ENCODE measurements at regions of chr2 and their contacts with region 1.

Region 1: GRCh38 chr2:68849579-68850030 is 21.6 kb downstream of the BMP10 start:
- DNase-seq: no peak
- CTCF ChIP-seq: no peak

Region 2: DNA sequence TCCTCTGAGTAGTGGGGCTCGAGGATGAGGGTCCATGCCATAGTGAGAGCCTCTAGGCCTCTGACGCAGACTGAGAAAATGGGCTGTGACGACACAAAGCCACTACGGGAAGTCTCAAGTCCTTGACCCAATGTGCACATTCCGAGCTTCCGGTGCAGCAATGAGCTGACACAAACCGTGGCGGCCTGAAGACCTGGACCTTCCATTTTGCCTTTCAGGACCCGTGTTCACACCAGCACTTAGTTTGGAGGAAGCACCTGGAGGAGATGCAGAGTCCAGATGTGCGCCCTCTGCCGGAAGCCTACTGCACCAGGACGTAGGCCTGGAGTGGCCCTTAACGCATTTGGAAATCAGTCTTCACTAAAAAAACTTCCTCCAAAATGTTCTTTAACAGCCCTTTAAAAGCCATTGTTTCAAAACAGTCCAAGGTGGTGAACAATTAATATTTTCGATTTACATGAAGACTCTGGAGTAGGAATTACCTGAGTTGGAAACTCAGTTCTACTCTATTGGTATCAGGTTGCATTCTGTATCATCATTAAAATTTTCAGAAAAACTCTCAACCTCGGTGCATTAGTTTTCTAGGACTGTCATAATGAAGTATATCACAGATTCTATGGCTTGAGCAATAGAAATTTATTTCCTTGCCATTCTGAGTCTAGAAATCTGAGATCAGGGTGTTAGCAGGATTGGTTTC is 12.3 kb before region 1 on chr2:
- CTCF ChIA-PET with region 1: interaction called, 13 read pairs
- POLR2A ChIA-PET with region 1: no interaction called
- DNase-seq: peak; percentile 57
- CTCF ChIP-seq: peak; percentile 80